ENCODE measurements at regions of chr14 and their contacts with region 1.

Region 1: DNA sequence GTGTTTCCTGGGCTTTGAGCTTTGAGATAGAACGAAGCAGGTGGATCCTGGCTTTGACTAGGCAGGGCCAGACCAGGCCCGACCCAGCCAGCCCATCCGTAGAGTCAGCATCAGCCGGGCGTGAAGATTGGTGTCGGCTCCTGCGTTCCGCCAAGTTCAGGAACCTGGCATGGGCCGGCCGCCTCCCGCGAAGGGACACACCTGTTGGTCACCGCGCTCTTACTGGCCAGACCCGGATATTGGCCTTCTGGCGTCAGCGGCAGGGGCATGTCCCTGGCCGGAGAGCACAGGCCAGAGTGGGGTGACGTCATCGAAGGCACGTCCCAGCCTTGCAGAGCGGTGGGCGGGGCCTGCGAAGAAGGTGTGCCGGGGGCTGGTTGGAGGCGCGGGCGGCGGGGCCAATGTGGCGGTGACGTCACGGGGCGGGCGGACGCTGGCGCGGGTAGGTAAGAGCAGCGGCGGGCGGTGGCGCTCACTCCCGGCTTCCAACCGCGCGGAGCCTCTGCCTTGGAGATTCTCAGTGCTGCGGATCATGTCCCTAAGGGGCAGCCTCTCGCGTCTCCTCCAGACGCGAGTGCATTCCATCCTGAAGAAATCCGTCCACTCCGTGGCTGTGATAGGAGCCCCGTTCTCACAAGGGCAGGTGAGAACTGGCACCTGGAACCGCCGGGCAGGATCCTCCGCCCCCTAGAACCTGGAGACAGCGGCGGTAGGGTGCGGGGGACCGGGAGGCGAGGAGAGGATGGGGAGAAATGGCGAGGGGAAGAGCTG is at the start of gene ARG2:
- DNase-seq: peak; percentile 65
- ATAC-seq: peak; percentile 97
- H3K4me3 ChIP-seq: peak within 1 kb of the TSS; percentile 82
- H3K27ac ChIP-seq: no peak within 1 kb of the TSS
- H3K4me1 ChIP-seq: peaks cover 5% of the 10 kb centered on the region; the same call in 1 of the 2 replicates
- H3K27me3 ChIP-seq: no peaks in the 10 kb centered on the region
- CTCF ChIP-seq: peak in 1 of 3 experiments; percentile 32; a peak in 1 of 6 replicates
- EP300 ChIP-seq: no peak
- POLR2A ChIP-seq: peak; percentile 56
- RAD21 ChIP-seq: no peak
- polyA plus RNA-seq, gene ARG2: 2.1 to 3.2 TPM

Region 2: GRCh38 chr14:67491741-67492505 is 127.7 kb before region 1 on chr14:
- CTCF ChIA-PET with region 1: no interaction called
- POLR2A ChIA-PET with region 1: no interaction called
- RAD21 ChIA-PET with region 1: no interaction called
- SMC1A ChIA-PET with region 1: no interaction called
- in situ Hi-C with region 1: no loop called
- intact Hi-C with region 1: no loop called
- DNase-seq: no peak
- ATAC-seq: no peak
- H3K4me3 ChIP-seq: no peak overlapping the region
- H3K27ac ChIP-seq: 0 out of 2 replicates have a peak overlapping the region, but pooled peaks have one; percentile 56
- H3K4me1 ChIP-seq: peaks cover 38% of the 10 kb centered on the region
- H3K27me3 ChIP-seq: no peaks in the 10 kb centered on the region
- CTCF ChIP-seq: no peak
- EP300 ChIP-seq: no peak
- POLR2A ChIP-seq: no peak
- RAD21 ChIP-seq: no peak

Region 3: GRCh38 chr14:67583711-67584644 is 35.7 kb before region 1 on chr14:
- CTCF ChIA-PET with region 1: interaction called, 30 read pairs
- POLR2A ChIA-PET with region 1: interaction called, 3 read pairs
- RAD21 ChIA-PET with region 1: interaction called, 14 read pairs
- SMC1A ChIA-PET with region 1: interaction called, 32 read pairs
- in situ Hi-C with region 1: no loop called
- intact Hi-C with region 1: no loop called
- DNase-seq: no peak
- ATAC-seq: peak; percentile 98
- H3K4me3 ChIP-seq: no peak overlapping the region
- H3K27ac ChIP-seq: no peak overlapping the region
- H3K4me1 ChIP-seq: no peaks in the 10 kb centered on the region
- H3K27me3 ChIP-seq: no peaks in the 10 kb centered on the region
- CTCF ChIP-seq: peak; percentile 77 to 83 (median 80)
- EP300 ChIP-seq: no peak
- POLR2A ChIP-seq: no peak
- RAD21 ChIP-seq: peak; percentile 96

Region 4: DNA sequence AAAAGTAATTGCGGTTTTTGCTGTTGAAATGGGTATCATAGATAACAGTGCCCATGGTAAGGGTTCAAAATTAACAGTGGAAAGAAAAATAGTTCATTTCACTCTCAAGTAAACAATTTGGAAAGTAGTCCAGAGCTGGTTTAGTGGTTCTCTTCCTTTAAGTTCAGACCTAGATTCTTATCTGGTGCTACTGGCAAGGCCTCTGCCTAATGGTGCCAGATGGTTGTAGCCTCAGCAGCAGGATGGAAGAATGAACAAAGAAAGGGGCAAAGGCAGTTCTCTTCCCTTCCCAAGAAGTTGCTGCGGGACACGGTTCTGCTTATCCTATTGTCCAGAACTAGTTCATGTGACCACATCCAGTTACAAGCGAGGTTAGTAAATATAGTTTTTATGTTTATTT is 10.6 kb after region 1 on chr14:
- CTCF ChIA-PET with region 1: interaction called, 14 read pairs
- POLR2A ChIA-PET with region 1: interaction called, 5 read pairs
- RAD21 ChIA-PET with region 1: interaction called, 6 read pairs
- SMC1A ChIA-PET with region 1: interaction called, 7 read pairs
- in situ Hi-C with region 1: no loop called
- intact Hi-C with region 1: no loop called
- DNase-seq: no peak
- ATAC-seq: no peak
- H3K4me3 ChIP-seq: no peak overlapping the region
- H3K27ac ChIP-seq: no peak overlapping the region
- H3K4me1 ChIP-seq: no peaks in the 10 kb centered on the region
- H3K27me3 ChIP-seq: no peaks in the 10 kb centered on the region
- CTCF ChIP-seq: no peak
- EP300 ChIP-seq: no peak
- POLR2A ChIP-seq: no peak
- RAD21 ChIP-seq: no peak

Region 5: DNA sequence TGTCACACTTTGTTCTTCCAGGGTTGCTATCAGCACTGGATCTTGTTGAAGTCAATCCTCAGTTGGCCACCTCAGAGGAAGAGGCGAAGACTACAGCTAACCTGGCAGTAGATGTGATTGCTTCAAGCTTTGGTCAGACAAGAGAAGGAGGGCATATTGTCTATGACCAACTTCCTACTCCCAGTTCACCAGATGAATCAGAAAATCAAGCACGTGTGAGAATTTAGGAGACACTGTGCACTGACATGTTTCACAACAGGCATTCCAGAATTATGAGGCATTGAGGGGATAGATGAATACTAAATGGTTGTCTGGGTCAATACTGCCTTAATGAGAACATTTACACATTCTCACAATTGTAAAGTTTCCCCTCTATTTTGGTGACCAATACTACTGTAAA is 31.1 kb after region 1 on chr14:
- CTCF ChIA-PET with region 1: interaction called, 6 read pairs
- POLR2A ChIA-PET with region 1: interaction called, 3 read pairs
- RAD21 ChIA-PET with region 1: interaction called, 4 read pairs
- SMC1A ChIA-PET with region 1: interaction called, 10 read pairs
- in situ Hi-C with region 1: no loop called
- intact Hi-C with region 1: no loop called
- DNase-seq: no peak
- ATAC-seq: no peak
- H3K4me3 ChIP-seq: no peak overlapping the region
- H3K27ac ChIP-seq: no peak overlapping the region
- H3K4me1 ChIP-seq: no peaks in the 10 kb centered on the region
- H3K27me3 ChIP-seq: no peaks in the 10 kb centered on the region
- CTCF ChIP-seq: no peak
- EP300 ChIP-seq: no peak
- POLR2A ChIP-seq: no peak
- RAD21 ChIP-seq: no peak

Region 6: GRCh38 chr14:67680121-67680602 is 60.5 kb after region 1 on chr14:
- CTCF ChIA-PET with region 1: interaction called, 6 read pairs
- POLR2A ChIA-PET with region 1: no interaction called
- RAD21 ChIA-PET with region 1: interaction called, 4 read pairs
- SMC1A ChIA-PET with region 1: interaction called, 15 read pairs
- in situ Hi-C with region 1: no loop called
- intact Hi-C with region 1: no loop called
- DNase-seq: peak; percentile 90
- ATAC-seq: peak; percentile 98
- H3K4me3 ChIP-seq: peak overlapping the region; percentile 25; the same call in 1 of the 2 replicates
- H3K27ac ChIP-seq: peak overlapping the region; percentile 58
- H3K4me1 ChIP-seq: peaks cover 22% of the 10 kb centered on the region
- H3K27me3 ChIP-seq: no peaks in the 10 kb centered on the region
- CTCF ChIP-seq: no peak
- EP300 ChIP-seq: peak; percentile 54 to 91; a peak in 2 of 4 replicates
- POLR2A ChIP-seq: no peak
- RAD21 ChIP-seq: no peak

Measured in GM12878 (cell line).